ENCODE measurements at regions of chr20 and their contacts with region 1.

Region 1: GRCh38 chr20:18412221-18412901 is 54.5 kb downstream of the DZANK1 start:
- DNase-seq: peak in 1 of 14 experiments; percentile 4
- ATAC-seq: no peak
- H3K4me3 ChIP-seq: no peak overlapping the region
- H3K4me3 Mint-ChIP-seq: no peak overlapping the region
- H3K27ac ChIP-seq: no peak overlapping the region
- H3K27ac Mint-ChIP-seq: no peak overlapping the region
- H3K4me1 ChIP-seq: no peaks in the 10 kb centered on the region
- H3K4me1 Mint-ChIP-seq: no peaks in the 10 kb centered on the region
- H3K27me3 ChIP-seq: no peaks in the 10 kb centered on the region
- H3K27me3 Mint-ChIP-seq: no peaks in the 10 kb centered on the region
- CTCF ChIP-seq: no peak

Region 2: DNA sequence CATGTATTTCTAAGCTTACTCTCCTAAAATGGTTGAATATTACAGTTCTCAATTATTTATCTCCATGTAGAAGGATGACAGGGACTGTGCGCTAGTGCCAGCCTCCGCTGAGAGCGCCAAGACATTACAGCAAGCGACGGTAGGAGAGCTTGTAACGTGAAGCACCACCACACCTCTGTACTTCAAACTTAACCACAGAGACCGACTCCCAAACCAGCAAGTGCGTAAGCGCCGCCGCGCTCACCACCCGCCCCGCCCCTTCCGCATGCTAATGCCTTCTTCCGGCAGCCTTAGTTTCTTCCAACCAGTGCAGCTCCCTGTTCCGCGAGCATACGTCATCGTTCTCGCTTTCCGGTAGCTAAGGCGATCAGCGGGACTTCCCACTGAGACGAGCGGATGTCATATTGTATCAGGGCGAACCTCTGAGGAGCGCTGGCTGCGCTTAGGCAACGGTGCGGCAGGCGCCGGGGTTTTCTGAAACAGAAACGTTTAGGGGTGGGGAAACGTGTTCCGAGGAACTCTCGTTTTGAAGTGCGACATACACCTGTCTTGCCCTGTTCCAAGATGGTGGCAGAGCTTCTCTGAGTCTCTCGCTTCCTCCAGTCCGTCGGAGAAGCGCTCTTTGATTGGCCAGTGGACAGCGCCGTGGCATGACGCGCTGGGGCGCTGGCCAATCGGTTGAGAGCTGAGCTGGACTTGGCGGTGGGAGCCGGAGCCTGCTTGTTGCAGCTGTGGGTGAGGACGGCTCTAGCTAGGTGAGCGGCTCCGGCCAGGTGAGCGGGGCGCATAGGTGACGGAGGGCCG is 95.1 kb after region 1 on chr20 and contains the start of gene SEC23B:
- CTCF ChIA-PET with region 1: no interaction called
- POLR2A ChIA-PET with region 1: no interaction called
- intact Hi-C with region 1: loop called in 1 of 2 experiments (anchors 1 kb)
- DNase-seq: peak; percentile 94 to 99 (median 98)
- ATAC-seq: peak; percentile 81
- H3K4me3 ChIP-seq: peak within 1 kb of the TSS; percentile 86
- H3K4me3 Mint-ChIP-seq: peak within 1 kb of the TSS; percentile 98
- H3K27ac ChIP-seq: peak within 1 kb of the TSS; percentile 94 to 99
- H3K27ac Mint-ChIP-seq: peak within 1 kb of the TSS; percentile 100
- H3K4me1 ChIP-seq: peaks cover 26% of the 10 kb centered on the region
- H3K4me1 Mint-ChIP-seq: peaks cover 52% of the 10 kb centered on the region
- H3K27me3 ChIP-seq: peaks cover 0 to 2% of the 10 kb centered on the region in 2 experiments
- H3K27me3 Mint-ChIP-seq: no peaks in the 10 kb centered on the region
- CTCF ChIP-seq: no peak
- total RNA-seq, gene SEC23B: 29.2 to 32.8 TPM

Region 3: GRCh38 chr20:18533491-18533890 is 121.1 kb after region 1 on chr20:
- CTCF ChIA-PET with region 1: no interaction called
- POLR2A ChIA-PET with region 1: no interaction called
- intact Hi-C with region 1: loop called (anchors 5 kb)
- DNase-seq: no peak
- ATAC-seq: no peak
- H3K4me3 ChIP-seq: no peak overlapping the region
- H3K4me3 Mint-ChIP-seq: no peak overlapping the region
- H3K27ac ChIP-seq: no peak overlapping the region
- H3K27ac Mint-ChIP-seq: no peak overlapping the region
- H3K4me1 ChIP-seq: no peaks in the 10 kb centered on the region
- H3K4me1 Mint-ChIP-seq: no peaks in the 10 kb centered on the region
- H3K27me3 ChIP-seq: no peaks in the 10 kb centered on the region
- H3K27me3 Mint-ChIP-seq: no peaks in the 10 kb centered on the region
- CTCF ChIP-seq: no peak

Region 4: GRCh38 chr20:18587665-18588573 is 175.6 kb after region 1 on chr20 and contains the start of gene DTD1:
- CTCF ChIA-PET with region 1: no interaction called
- POLR2A ChIA-PET with region 1: no interaction called
- intact Hi-C with region 1: loop called in 1 of 2 experiments (anchors 1 kb)
- DNase-seq: peak; percentile 56 to 89 (median 74)
- ATAC-seq: peak; percentile 75
- H3K4me3 ChIP-seq: peak within 1 kb of the TSS; percentile 63
- H3K4me3 Mint-ChIP-seq: peak within 1 kb of the TSS; percentile 89
- H3K27ac ChIP-seq: peak within 1 kb of the TSS; percentile 38 to 56
- H3K27ac Mint-ChIP-seq: peak within 1 kb of the TSS; percentile 90
- H3K4me1 ChIP-seq: peaks cover 17% of the 10 kb centered on the region
- H3K4me1 Mint-ChIP-seq: peaks cover 23% of the 10 kb centered on the region
- H3K27me3 ChIP-seq: no peaks in the 10 kb centered on the region
- H3K27me3 Mint-ChIP-seq: peaks cover 8% of the 10 kb centered on the region
- CTCF ChIP-seq: peak; percentile 44
- total RNA-seq, gene DTD1: 15.4 to 16.1 TPM

Region 5: DNA sequence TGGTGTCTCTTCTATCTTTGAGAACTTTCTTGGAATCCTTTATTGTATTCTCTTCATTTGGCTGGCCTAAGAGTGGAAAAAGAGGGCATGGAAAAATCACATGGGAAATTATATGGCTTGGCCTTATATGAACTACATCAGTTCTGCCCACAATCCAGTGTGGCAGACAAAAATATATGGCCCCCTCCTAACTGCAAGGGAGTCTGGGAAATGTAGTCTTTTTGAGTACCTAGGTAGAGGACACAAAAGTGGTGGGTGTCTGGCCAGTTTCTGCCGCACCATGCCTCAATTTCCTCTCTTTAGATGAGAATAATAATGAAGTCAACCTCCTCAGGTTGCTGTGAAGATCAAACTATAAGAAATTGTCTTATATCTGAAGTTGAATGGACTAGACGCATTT is 510.5 kb after region 1 on chr20:
- CTCF ChIA-PET with region 1: no interaction called
- POLR2A ChIA-PET with region 1: no interaction called
- intact Hi-C with region 1: loop called in 1 of 2 experiments (anchors 5 kb)
- DNase-seq: no peak
- ATAC-seq: no peak
- H3K4me3 ChIP-seq: no peak overlapping the region
- H3K4me3 Mint-ChIP-seq: no peak overlapping the region
- H3K27ac ChIP-seq: no peak overlapping the region
- H3K27ac Mint-ChIP-seq: no peak overlapping the region
- H3K4me1 ChIP-seq: no peaks in the 10 kb centered on the region
- H3K4me1 Mint-ChIP-seq: no peaks in the 10 kb centered on the region
- H3K27me3 ChIP-seq: no peaks in the 10 kb centered on the region
- H3K27me3 Mint-ChIP-seq: peaks cover 11% of the 10 kb centered on the region
- CTCF ChIP-seq: no peak

Region 6: DNA sequence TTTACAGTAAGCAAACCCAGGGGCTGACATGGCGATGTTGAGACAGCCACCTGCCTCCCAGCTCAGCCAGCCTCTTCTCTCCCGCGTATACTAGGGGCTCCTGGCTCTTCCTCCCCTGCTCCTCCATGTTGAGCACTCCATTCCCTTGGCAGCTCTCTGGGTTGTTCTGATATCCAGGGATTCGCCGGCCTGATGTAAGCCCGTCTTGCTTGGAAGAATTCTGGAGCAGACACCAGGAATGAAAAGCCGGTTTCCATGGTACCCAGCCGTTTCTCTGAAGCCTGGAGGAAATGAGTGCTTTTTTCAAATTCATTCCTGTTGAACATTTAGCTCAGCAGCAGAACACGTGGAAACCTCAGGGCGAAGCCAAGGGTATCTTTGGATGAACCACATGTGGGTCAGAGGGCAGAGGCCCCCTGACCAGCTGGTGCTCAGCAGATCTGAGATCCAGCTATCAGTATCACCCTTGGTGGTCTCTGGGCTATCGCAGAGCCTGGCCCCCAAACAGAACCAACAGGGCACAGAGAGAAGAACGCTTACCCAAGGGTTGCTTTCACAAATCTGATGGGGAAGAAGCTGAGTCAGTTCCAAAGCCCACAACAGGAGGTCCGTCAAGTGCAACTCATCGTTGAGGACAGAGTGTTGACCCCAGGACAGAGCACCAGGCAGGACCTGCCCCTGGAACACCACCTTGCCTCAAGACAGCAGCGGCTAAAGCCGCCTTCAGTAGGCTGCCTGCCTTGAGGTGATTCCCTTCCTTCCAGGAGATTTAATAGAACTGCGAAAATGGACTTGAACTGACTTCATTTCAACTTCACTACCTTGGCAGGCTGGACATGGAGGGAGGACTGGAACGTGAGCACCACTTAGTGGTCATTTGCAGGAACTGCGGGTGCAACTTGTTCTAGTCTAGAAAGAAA is 1249.6 kb after region 1 on chr20:
- CTCF ChIA-PET with region 1: no interaction called
- POLR2A ChIA-PET with region 1: no interaction called
- intact Hi-C with region 1: loop called in 1 of 2 experiments (anchors 2 kb)
- DNase-seq: peak in 10 of 14 experiments; percentile 2 to 64 (median 12)
- ATAC-seq: no peak
- H3K4me3 ChIP-seq: no peak overlapping the region
- H3K4me3 Mint-ChIP-seq: no peak overlapping the region
- H3K27ac ChIP-seq: no peak overlapping the region
- H3K27ac Mint-ChIP-seq: no peak overlapping the region
- H3K4me1 ChIP-seq: no peaks in the 10 kb centered on the region
- H3K4me1 Mint-ChIP-seq: no peaks in the 10 kb centered on the region
- H3K27me3 ChIP-seq: peaks cover 0 to 4% of the 10 kb centered on the region in 2 experiments
- H3K27me3 Mint-ChIP-seq: peaks cover 44% of the 10 kb centered on the region
- CTCF ChIP-seq: peak; percentile 70